ENCODE measurements at regions of chr2 and their contacts with region 1.

Region 1: GRCh38 chr2:178530625-178531142 is 50.4 kb downstream of the PLEKHA3 start:
- DNase-seq: peak; percentile 79
- H3K4me3 Mint-ChIP-seq: peak overlapping the region; percentile 47
- H3K27ac Mint-ChIP-seq: peak overlapping the region; percentile 39
- H3K4me1 Mint-ChIP-seq: peaks cover 41% of the 10 kb centered on the region
- H3K27me3 Mint-ChIP-seq: no peaks in the 10 kb centered on the region

Region 2: DNA sequence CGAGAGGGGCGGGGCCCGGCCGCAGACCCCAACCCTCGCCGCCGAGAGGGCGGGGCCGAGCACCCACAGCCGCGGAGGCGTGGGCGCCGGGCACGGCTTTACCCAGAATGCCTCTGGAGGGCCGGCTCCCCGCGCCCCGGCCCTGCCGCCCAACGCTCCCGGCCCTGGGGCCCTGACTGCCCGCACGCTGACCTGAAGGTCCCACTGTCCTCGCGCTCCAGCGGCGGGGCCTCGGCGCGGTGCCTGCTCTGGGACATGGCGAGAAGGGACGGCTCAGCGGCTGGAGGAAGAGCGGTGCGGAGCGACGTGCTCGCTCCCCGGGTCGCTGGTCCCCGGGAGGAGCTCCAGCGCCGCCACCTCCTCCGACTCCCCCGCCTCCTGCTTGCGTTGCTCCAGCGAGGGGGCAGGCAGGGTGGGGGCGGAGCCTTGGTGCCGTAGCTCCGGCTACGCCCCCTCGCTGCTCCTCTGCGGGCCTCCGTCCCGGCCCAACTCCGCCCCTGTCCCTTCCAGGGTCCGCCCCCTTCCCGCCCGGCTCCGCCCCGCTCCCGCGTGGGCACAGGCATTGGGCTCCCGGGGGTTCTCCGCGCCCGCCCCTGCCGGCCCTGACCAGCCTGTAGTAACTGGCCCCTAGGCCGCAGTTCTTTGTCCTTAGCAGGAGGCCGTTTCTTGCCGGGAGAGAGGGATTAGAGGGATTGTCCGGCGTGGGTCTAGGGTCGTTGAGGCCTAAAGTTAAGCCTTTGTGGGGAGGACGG is 79.7 kb before region 1 on chr2 and contains the starts of genes PJVK and PRKRA:
- intact Hi-C with region 1: loop called (anchors 1 kb)
- DNase-seq: peak; percentile 99
- H3K4me3 Mint-ChIP-seq: peak within 1 kb of the TSS; percentile 94
- H3K27ac Mint-ChIP-seq: peak within 1 kb of the TSS; percentile 98
- H3K4me1 Mint-ChIP-seq: peaks cover 25% of the 10 kb centered on the region
- H3K27me3 Mint-ChIP-seq: peaks cover 7% of the 10 kb centered on the region
- total RNA-seq, gene PJVK: 2.0 and 2.3 TPM in 2 replicates
- total RNA-seq, gene PRKRA: 52.4 and 61.2 TPM in 2 replicates

Region 3: DNA sequence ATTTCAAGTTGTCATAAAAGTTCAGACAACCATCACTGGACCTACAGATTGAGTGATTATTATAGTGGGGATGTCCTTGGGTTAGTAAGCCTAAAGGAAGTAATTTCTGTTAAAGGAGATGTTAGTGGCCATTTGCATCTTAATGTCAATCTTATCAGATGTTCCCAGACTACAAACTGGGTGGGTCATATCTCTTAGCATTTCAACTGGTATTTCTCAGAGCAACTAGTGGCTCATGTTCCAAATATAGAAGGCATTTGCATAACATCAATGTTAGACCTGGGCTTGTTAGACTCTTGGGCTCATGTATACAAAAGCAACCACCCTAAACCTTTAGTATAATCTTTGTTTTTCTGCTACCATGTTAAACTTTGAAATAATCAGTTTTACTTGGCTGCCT is 32.5 kb before region 1 on chr2:
- intact Hi-C with region 1: no loop called
- DNase-seq: no peak
- H3K4me3 Mint-ChIP-seq: no peak overlapping the region
- H3K27ac Mint-ChIP-seq: no peak overlapping the region
- H3K4me1 Mint-ChIP-seq: peaks cover 7% of the 10 kb centered on the region
- H3K27me3 Mint-ChIP-seq: no peaks in the 10 kb centered on the region

Region 4: DNA sequence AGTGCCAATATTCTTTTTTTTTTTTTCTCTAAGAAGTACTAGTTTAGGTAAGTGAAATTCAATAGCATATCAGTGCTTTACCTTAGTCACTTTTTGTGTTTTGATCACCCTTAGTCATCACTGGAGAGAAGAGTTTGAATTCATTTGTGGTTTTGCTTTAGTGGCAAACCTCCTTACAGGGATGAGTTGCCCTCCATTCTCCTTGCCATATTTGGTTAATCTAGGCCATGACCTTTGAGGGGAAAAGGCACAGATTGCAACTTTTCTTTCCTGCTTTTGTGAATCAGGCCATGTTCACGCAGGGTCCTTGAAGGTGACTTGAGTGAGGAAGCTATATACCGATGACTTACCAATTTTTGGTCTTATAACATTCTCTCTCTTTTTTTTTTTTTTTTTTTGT is 16.0 kb before region 1 on chr2:
- intact Hi-C with region 1: loop called (anchors 1 kb)
- DNase-seq: peak; percentile 77
- H3K4me3 Mint-ChIP-seq: peak overlapping the region; percentile 22
- H3K27ac Mint-ChIP-seq: peak overlapping the region; percentile 62
- H3K4me1 Mint-ChIP-seq: peaks cover 12% of the 10 kb centered on the region
- H3K27me3 Mint-ChIP-seq: no peaks in the 10 kb centered on the region

Region 5: GRCh38 chr2:178542569-178542968 is 11.9 kb after region 1 on chr2:
- intact Hi-C with region 1: no loop called
- DNase-seq: no peak
- H3K4me3 Mint-ChIP-seq: no peak overlapping the region
- H3K27ac Mint-ChIP-seq: no peak overlapping the region
- H3K4me1 Mint-ChIP-seq: peaks cover 7% of the 10 kb centered on the region
- H3K27me3 Mint-ChIP-seq: no peaks in the 10 kb centered on the region

Region 6: DNA sequence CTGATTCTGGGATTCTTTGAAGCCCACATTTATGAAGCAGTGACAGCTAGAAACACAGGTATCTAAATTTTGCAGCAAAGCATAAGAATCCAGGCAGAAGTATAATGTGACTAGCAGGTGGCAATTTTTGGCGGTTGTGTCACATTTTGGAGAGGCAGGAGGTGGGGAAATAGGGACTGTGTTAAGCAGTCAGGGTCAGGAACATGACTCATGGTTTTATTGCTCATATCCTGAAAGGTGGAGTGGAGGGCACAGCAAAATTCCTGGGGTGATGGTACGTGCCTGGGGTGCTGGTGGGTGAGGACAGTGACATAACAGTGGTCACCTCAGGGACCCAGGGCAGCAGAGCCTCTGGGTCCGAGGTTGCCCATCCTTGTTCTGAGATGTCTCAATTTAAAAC is 340.0 kb after region 1 on chr2:
- intact Hi-C with region 1: loop called (anchors 2 kb)
- DNase-seq: peak; percentile 56
- H3K4me3 Mint-ChIP-seq: no peak overlapping the region
- H3K27ac Mint-ChIP-seq: no peak overlapping the region
- H3K4me1 Mint-ChIP-seq: peaks cover 21% of the 10 kb centered on the region
- H3K27me3 Mint-ChIP-seq: no peaks in the 10 kb centered on the region